Activated CD4-positive, alpha-beta T cell treated with anti-CD3 and anti-CD28 coated beads for 36 hours (primary cell): ENCODE measurements at regions of chr20 and their contacts with region 1.

Region 1: DNA sequence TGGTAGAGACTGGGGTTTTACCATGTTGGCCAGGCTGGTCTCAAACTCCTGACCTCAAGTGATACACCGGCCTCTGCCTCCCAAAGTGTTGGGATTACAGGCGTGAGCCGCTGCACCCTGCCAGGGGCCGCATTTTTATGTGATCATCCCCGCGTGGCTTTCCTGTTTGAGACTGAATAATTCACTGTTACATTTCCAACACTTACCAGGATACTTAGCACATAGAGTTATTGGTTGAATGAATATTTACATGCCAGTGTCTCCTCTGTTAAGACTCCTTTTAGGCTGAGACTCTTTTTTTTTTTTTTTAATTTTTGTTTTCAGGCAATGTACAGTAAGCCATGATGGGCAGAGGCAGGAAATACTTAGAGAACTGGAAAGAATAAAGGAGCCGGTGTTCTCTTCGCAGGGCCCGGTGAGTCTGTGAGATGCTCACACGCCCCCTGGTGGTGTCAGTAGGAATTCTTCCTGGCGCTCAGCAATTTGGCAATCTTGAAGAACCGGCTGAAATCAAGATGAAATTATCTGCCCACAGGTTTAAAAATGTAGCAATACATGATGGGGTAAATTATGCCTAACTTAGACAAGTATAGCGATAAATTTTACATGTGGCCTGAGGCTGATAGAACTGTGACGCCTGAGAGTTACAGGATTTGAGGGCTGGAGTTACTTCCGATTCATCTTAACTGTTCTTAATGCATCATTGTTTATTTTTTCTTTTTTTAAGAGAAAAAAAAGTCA is 7.6 kb upstream of the RNF114 start:
- DNase-seq: peak; percentile 90
- ATAC-seq: peak; percentile 98
- H3K4me3 Mint-ChIP-seq: no peak overlapping the region
- H3K27ac Mint-ChIP-seq: peak overlapping the region; percentile 63
- H3K4me1 Mint-ChIP-seq: peaks cover 6% of the 10 kb centered on the region
- H3K27me3 Mint-ChIP-seq: peaks cover 2% of the 10 kb centered on the region

Region 2: DNA sequence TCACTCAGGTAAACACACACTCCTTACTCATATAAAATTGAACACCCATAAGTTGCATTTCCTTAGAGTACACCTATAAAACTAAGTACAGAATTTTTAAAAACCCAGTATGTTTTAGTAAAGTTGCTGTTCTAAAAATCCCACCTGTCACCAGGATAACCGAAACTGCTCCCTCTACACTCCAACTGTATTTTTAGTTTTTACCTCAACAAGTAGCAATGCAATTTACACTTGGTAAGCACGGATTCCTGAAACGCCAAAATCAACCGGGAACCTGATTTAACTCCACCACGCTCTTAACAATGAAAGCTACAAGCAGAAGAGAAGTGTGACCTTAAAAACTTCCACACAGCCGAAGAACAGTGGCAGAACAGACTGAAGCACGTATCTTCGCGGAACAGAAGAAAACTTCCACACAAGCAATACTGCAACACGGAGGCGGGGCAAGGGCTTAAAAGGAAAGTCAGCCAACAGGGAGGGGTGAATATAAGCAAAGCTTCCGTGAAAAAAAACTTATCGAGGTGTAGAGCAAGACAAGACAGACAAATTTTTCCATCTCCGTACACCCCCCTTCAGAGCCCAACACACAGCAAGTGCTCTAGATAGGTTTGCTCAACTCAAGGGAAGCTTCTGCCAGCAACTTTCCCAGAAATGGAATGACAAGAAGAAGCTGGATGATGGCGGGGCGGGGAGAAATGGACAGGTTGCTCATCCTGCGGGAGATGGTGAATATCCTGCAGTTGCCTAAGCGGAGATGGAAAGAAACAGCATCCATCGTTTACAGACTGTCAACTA is 741.8 kb before region 1 on chr20:
- CTCF ChIA-PET with region 1: no interaction called
- POLR2A ChIA-PET with region 1: no interaction called
- intact Hi-C with region 1: no loop called
- DNase-seq: peak; percentile 85
- ATAC-seq: peak; percentile 49
- H3K4me3 Mint-ChIP-seq: peak overlapping the region; percentile 96
- H3K27ac Mint-ChIP-seq: peak overlapping the region; percentile 89
- H3K4me1 Mint-ChIP-seq: peaks cover 51% of the 10 kb centered on the region
- H3K27me3 Mint-ChIP-seq: no peaks in the 10 kb centered on the region

Region 3: GRCh38 chr20:49888345-49888966 is 40.1 kb before region 1 on chr20:
- CTCF ChIA-PET with region 1: interaction called, 3 read pairs
- POLR2A ChIA-PET with region 1: no interaction called
- intact Hi-C with region 1: loop called in 1 of 2 experiments (anchors 5 kb)
- DNase-seq: peak; percentile 77
- ATAC-seq: peak; percentile 60
- H3K4me3 Mint-ChIP-seq: no peak overlapping the region
- H3K27ac Mint-ChIP-seq: peak overlapping the region; percentile 51
- H3K4me1 Mint-ChIP-seq: peaks cover 14% of the 10 kb centered on the region
- H3K27me3 Mint-ChIP-seq: no peaks in the 10 kb centered on the region

Region 4: DNA sequence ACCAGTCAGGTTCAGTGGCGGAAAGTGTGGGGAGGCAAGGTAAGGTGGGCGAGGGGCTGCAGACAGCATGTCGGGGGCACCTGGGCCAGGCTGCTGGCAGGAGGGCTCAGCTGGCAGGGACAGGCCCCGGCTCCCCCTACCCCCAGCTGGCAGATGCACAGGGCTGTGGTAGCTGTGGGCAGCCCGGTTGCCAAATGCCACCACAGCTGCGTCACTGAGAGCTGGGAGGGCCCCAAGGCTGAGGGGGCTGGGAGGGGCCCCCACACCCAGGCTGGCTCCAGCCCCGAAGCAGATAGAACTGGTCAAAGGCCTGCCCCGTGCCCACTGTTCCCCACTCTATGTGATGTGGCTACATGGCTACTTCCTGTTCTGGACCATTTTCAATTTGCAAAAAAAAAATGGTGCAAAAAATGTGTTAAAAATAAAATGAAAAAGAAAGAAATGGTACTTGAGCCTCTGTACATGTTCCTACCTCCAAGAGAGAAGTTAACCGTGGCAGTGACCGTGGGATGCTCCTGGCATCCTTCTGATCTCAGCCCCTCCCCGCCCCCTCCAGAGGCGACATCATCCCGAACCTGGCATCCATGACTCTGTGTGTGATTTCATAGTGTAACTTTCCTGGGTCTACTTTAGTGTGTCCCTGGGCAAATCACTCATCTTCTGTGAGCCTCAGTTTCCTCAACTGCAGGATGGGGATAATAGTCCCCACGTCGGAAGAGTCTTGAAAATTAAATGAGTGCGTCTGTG is 120.0 kb after region 1 on chr20:
- CTCF ChIA-PET with region 1: no interaction called
- POLR2A ChIA-PET with region 1: no interaction called
- intact Hi-C with region 1: no loop called
- DNase-seq: peak; percentile 26
- ATAC-seq: peak; percentile 36
- H3K4me3 Mint-ChIP-seq: no peak overlapping the region
- H3K27ac Mint-ChIP-seq: no peak overlapping the region
- H3K4me1 Mint-ChIP-seq: peaks cover 8% of the 10 kb centered on the region
- H3K27me3 Mint-ChIP-seq: peaks cover 13% of the 10 kb centered on the region